ENCODE measurements at regions of chr13 and their contacts with region 1.

Region 1: GRCh38 chr13:39602614-39603366 is at the start of gene LHFPL6:
- DNase-seq: peak; percentile 80

Region 2: DNA sequence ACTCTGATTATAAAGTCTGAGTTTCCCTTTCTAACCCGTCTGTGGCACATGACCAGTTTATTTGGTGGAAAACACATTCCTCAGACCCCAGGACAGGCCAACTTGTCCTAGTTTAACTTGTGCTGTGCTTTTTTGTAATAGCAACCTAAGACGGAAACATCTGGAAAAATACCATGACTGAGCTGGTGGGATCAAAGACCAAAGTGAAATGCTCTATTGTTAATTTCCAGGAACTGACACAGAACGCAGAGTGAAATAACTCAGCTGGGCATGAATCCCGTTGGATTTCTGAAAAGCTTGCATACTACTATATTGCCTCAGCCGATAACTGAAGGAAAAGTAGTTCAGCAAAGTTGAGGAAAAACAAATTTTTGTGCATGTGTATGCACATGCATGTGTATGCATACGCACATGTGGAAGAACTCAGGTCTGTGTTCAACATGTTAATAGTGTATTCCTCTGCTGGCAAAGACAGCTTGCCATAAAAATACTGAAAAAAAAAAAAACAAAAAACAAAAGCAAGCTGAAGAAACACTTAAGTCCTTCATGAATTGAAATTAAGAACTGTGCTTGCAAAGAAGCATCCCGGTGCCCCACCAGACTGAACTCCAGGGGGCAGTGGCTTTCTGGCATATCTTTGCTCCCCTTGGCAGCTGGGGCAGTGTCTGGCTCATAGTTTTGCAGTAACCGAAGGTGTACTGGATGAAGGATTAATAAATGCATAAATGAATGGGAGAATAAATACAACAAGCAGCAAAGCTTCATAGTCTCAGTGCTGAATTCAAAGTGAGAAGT is 187.6 kb before region 1 on chr13:
- in situ Hi-C with region 1: loop called (anchors 25 kb)
- DNase-seq: peak; percentile 50

Region 3: GRCh38 chr13:39712626-39713025 is 109.8 kb after region 1 on chr13:
- in situ Hi-C with region 1: no loop called
- DNase-seq: no peak